Lower leg skin (tissue), 4 donors: ENCODE measurements at regions of chr7 and their contacts with region 1.

Region 1: GRCh38 chr7:88566173-88566729 is 193.2 kb upstream of the ZNF804B start:
- DNase-seq: no peak
- H3K4me3 ChIP-seq: no peak overlapping the region
- CTCF ChIP-seq: no peak
- POLR2A ChIP-seq: no peak

Region 2: GRCh38 chr7:88254716-88255115 is 311.5 kb before region 1 on chr7:
- intact Hi-C with region 1: loop called (anchors 5 kb)
- DNase-seq: no peak
- H3K4me3 ChIP-seq: no peak overlapping the region
- CTCF ChIP-seq: no peak
- POLR2A ChIP-seq: no peak

Region 3: DNA sequence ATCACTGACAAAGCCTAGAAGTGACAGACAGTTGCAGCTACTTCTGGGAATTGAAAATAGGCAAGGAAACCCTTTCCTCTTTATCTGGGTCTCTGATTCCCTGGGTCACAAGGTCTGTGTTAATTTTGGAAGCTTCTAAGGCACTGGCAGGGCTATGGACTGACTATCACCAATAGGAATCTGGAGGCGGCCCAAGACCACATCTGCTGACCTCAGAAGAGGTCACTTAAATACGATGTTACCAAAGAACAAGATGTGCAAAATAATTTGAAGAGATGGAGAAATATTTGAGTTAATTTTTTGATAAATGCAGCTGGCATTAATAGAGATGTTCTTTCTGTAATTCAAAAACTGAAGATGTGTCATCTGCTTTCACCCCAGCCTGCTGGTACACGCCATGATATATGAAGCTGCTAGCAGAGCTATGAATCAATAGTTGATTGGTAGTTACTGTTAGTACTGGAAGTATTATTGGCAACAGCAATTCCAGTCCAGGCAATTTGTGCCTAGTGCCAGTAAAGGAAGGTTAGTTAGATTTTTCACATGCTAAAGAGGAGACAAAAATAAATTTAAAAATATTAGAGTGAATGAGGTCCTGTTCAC is 254.1 kb before region 1 on chr7:
- intact Hi-C with region 1: no loop called
- DNase-seq: peak; percentile 81 to 94
- H3K4me3 ChIP-seq: no peak overlapping the region
- CTCF ChIP-seq: no peak
- POLR2A ChIP-seq: no peak

Region 4: DNA sequence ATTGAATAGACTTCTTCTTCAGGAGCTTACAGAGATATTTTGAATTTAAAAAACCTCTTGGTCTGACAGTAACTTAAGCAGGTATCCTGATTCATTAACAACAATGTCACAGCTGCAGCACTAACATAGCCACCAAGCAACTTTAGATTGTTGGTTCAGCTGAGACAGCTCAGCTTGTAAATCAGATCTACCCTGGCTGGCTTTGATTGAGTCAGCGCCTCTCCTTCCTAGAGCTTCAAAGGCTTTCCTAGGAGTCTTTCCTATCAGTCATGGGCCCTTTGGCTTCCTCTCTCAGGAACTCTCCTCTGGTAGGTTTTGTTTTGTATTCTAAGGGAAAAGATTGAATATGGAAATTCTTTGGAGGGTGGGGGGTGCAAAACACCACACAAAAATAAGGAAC is 188.8 kb before region 1 on chr7:
- intact Hi-C with region 1: no loop called
- DNase-seq: no peak
- H3K4me3 ChIP-seq: no peak overlapping the region
- CTCF ChIP-seq: no peak
- POLR2A ChIP-seq: no peak

Region 5: GRCh38 chr7:90155206-90155605 is 1589.0 kb after region 1 on chr7:
- intact Hi-C with region 1: no loop called
- DNase-seq: no peak
- H3K4me3 ChIP-seq: no peak overlapping the region
- CTCF ChIP-seq: no peak
- POLR2A ChIP-seq: no peak